Activated naive CD4-positive, alpha-beta T cell treated with anti-CD3 and anti-CD28 coated beads, Interleukin-2, amount 10 ng/mL, durations not matched to agents 7 days and 5 days (primary cell): ENCODE measurements at regions of chr1 and their contacts with region 1.

Region 1: GRCh38 chr1:94335950-94336349 is 82.2 kb upstream of the ABCD3 start:
- DNase-seq: peak; percentile 43
- H3K4me3 Mint-ChIP-seq: no peak overlapping the region
- H3K27ac Mint-ChIP-seq: peak overlapping the region; percentile 25
- H3K4me1 Mint-ChIP-seq: no peaks in the 10 kb centered on the region
- H3K27me3 Mint-ChIP-seq: peaks cover 47% of the 10 kb centered on the region

Region 2: DNA sequence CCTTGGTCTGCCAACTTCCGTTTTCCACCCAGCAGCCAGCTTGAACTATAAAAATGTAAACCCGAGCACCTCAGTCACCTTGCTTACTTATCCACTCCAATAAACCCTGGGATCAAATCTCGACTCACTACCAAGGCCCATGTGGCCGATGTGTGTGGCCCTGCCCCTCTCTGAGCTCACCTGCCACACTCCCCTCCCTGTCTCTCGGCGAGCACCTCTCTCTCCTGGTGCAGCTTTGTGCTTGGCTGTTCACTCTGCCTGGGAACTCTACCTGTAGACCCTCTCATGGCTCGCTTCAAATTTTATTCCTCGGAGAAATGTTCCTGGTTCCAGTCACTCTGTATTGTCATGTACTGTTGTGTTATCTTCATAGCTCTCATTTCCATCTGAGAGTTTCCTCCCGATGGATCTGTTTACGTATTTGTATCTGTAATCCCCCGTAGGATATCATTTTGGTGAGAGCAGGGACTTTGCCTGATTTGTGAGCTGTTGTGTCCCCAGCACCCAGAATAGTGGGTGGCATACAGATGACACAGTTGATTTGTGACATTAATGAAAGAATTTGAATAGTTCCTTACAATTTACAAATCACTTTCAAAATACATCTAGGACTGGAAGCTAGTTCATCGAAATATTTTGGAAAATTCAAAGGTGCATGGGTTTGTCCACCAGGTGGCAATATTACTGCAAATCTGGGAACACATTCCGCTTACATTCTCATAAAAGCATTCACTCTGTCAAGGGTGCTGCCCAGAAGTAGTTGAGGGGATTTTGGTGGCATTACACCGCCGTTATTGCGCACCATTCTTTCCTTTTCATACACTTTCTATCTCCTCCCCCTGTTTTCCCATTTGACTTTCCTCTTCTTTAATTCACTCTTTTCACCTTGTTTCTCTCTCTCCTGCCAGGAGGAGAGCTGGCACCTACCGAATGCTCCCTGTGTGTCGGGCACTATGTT is 310.3 kb before region 1 on chr1:
- CTCF ChIA-PET with region 1: interaction called, 18 read pairs
- DNase-seq: no peak
- H3K4me3 Mint-ChIP-seq: no peak overlapping the region
- H3K27ac Mint-ChIP-seq: no peak overlapping the region
- H3K4me1 Mint-ChIP-seq: no peaks in the 10 kb centered on the region
- H3K27me3 Mint-ChIP-seq: peaks cover 39% of the 10 kb centered on the region

Region 3: GRCh38 chr1:94039514-94039870 is 296.5 kb before region 1 on chr1:
- CTCF ChIA-PET with region 1: interaction called, 42 read pairs
- DNase-seq: peak; percentile 68
- H3K4me3 Mint-ChIP-seq: no peak overlapping the region
- H3K27ac Mint-ChIP-seq: no peak overlapping the region
- H3K4me1 Mint-ChIP-seq: no peaks in the 10 kb centered on the region
- H3K27me3 Mint-ChIP-seq: peaks cover 50% of the 10 kb centered on the region

Region 4: DNA sequence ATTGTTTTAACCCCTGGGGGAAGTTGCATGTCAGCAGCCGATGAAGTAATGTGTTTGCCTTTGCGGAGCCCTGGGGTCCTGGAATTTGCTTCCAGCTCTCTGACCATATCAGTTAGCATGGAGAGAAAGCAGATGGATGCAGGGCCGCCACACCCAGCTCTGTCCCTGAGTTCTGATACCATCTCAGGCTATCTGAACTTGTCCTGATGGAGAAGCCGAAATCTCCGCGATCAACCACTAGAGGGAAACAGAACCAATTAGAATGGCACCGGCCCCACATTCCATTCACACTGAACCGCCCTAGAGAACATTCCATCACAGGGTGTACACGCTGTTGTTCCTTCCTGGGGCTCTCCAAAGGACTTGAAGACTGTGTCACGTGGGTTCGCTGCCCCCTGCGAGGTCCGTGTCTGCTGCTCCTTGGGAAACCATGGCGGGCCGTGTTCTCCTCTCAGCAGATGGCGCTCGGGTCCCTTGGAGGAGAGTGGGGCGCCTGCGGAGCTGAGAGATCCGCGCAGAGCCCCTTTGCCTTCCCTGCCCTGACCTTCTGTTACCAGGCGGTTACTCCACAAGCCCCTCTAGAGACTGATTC is 290.4 kb before region 1 on chr1:
- CTCF ChIA-PET with region 1: interaction called, 42 read pairs
- DNase-seq: peak; percentile 55
- H3K4me3 Mint-ChIP-seq: no peak overlapping the region
- H3K27ac Mint-ChIP-seq: no peak overlapping the region
- H3K4me1 Mint-ChIP-seq: peaks cover 6% of the 10 kb centered on the region
- H3K27me3 Mint-ChIP-seq: peaks cover 33% of the 10 kb centered on the region